BJ (cell line): ENCODE measurements at regions of chr1 and their contacts with region 1.

Region 1: DNA sequence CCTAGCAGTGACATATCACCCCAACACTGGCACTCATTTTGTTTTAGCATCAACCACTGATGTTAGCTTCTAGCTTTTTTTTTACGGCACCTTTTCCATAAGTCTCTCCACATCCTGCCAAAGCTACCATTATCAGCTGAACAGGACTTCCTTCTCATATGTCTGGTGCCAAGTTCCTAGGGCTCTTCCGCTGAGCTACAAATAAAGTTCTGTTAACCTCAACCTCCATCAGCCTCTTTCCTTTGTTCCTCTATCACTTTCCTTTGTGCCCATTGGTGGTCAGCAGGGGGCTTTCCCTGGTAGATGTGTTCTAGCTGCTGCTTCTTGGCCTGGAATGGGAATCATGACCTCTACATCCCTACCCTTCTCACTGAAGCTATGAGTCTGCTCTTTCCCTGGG is 163.8 kb downstream of the FAF1 start:
- DNase-seq: no peak
- H3K4me3 ChIP-seq: no peak overlapping the region
- H3K27me3 ChIP-seq: no peaks in the 10 kb centered on the region
- CTCF ChIP-seq: no peak

Region 2: GRCh38 chr1:50658459-50659076 is 137.7 kb before region 1 on chr1:
- CTCF ChIA-PET with region 1: no interaction called
- POLR2A ChIA-PET with region 1: interaction called, 20 read pairs
- DNase-seq: no peak
- H3K4me3 ChIP-seq: no peak overlapping the region
- H3K27me3 ChIP-seq: no peaks in the 10 kb centered on the region
- CTCF ChIP-seq: no peak